A549 (cell line): ENCODE measurements at regions of chr12 and their contacts with region 1.

Region 1: GRCh38 chr12:5988659-5989116 is 43.6 kb upstream of the ANO2 start:
- DNase-seq: peak; percentile 73 to 80
- ATAC-seq: peak; percentile 92 to 99
- H3K4me3 ChIP-seq: no peak overlapping the region
- H3K27ac ChIP-seq: no peak overlapping the region
- H3K4me1 ChIP-seq: no peaks in the 10 kb centered on the region
- CTCF ChIP-seq: peak; percentile 90
- EP300 ChIP-seq: no peak
- POLR2A ChIP-seq: no peak
- RAD21 ChIP-seq: peak; percentile 94 to 95

Region 2: GRCh38 chr12:5954651-5955050 is 34.0 kb before region 1 on chr12:
- CTCF ChIA-PET with region 1: interaction called, 10 read pairs
- POLR2A ChIA-PET with region 1: no interaction called
- DNase-seq: no peak
- ATAC-seq: no peak
- H3K4me3 ChIP-seq: no peak overlapping the region
- H3K27ac ChIP-seq: no peak overlapping the region
- H3K4me1 ChIP-seq: no peaks in the 10 kb centered on the region
- CTCF ChIP-seq: no peak
- EP300 ChIP-seq: no peak
- POLR2A ChIP-seq: no peak
- RAD21 ChIP-seq: no peak

Region 3: DNA sequence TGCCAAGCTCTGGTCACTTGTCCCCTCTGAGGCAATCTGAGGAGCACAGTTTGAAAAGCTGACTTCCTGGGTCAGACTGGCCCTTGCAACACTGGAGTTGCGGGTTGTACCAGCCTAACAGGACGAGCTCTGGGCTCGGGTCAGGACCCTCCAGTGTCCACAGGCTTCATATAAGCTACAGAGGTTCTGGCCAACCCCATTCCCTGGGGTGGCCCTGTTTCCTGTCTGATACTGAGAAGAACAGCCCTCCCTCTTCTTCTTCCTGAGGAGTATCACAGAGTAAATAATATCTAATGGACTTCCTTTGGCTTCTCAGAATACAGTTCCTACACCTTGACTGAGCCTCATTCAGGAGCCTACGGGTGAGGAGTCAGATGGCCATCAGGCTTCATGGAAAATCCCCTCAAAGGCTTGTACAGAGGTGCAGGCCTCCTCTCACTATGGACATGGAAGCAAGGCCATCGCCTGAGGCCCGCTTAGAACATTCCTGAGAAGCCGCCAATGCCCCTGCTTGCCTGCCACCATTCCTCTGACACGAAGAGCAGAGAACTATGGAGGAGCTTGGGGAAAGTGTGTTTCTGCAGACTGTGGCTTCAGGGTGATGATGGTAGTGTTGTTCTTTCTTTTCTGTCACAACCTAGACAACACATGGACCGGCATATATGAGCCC is 15.1 kb before region 1 on chr12:
- CTCF ChIA-PET with region 1: interaction called, 64 read pairs
- POLR2A ChIA-PET with region 1: no interaction called
- DNase-seq: no peak
- ATAC-seq: no peak
- H3K4me3 ChIP-seq: no peak overlapping the region
- H3K27ac ChIP-seq: no peak overlapping the region
- H3K4me1 ChIP-seq: no peaks in the 10 kb centered on the region
- CTCF ChIP-seq: no peak
- EP300 ChIP-seq: no peak
- POLR2A ChIP-seq: no peak
- RAD21 ChIP-seq: no peak

Region 4: GRCh38 chr12:6047249-6048237 is 58.9 kb after region 1 on chr12:
- CTCF ChIA-PET with region 1: interaction called, 361 read pairs
- POLR2A ChIA-PET with region 1: no interaction called
- DNase-seq: no peak
- ATAC-seq: peak; percentile 22 to 31; a peak in 3 of 6 replicates
- H3K4me3 ChIP-seq: no peak overlapping the region
- H3K27ac ChIP-seq: no peak overlapping the region
- H3K4me1 ChIP-seq: peaks cover 7% of the 10 kb centered on the region; the same call in 2 of the 3 replicates
- CTCF ChIP-seq: no peak
- EP300 ChIP-seq: no peak
- POLR2A ChIP-seq: no peak
- RAD21 ChIP-seq: no peak

Region 5: DNA sequence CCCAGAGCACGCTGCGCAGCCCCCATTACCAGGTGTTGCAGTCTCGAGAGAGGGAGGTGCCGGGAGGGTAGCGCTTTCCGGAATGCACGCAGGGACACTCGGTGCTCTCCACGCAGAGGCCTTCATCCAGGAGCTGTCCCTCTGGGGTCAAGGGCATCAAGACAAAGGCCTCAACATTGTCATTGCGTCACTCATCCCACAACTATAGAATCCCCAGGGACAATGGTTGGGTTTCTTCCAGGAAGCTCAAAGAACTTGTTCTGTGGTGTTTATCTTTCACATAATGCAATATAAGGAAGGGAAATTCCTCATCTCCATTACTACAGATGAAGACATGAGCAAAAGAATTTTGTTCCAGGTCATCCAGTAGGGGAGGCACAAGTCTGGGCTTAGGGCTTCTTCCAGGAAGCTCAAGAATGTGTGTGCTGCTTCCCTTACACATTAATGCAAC is 83.6 kb after region 1 on chr12:
- CTCF ChIA-PET with region 1: interaction called, 11 read pairs
- POLR2A ChIA-PET with region 1: no interaction called
- DNase-seq: peak in 1 of 2 experiments; percentile 66
- ATAC-seq: peak in 1 of 2 experiments; percentile 48; a peak in 3 of 6 replicates
- H3K4me3 ChIP-seq: no peak overlapping the region
- H3K27ac ChIP-seq: no peak overlapping the region
- H3K4me1 ChIP-seq: 0 out of 3 replicates have a peak, but pooled peaks cover 4% of the 10 kb centered on the region
- CTCF ChIP-seq: no peak
- EP300 ChIP-seq: no peak
- POLR2A ChIP-seq: no peak
- RAD21 ChIP-seq: peak in 1 of 2 experiments; percentile 15; a peak in 1 of 5 replicates

Region 6: DNA sequence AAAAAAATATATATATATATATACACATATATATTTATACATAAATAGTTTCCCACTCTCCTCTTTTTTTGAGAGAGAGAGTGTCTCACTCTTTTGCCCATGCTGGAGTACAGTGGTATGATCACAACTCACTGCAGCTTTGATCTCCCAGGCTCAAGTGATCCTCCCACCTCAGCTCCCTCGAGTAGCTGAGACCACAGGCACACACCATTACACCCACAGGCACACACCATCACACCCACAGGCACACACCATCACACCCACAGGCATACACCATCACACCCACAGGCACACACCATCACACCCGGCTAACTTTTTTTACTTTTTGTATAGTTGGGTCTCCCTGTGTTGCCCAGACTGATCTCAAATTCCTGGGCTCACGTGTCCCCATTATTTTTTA is 531.5 kb after region 1 on chr12:
- CTCF ChIA-PET with region 1: no interaction called
- POLR2A ChIA-PET with region 1: no interaction called
- DNase-seq: no peak
- ATAC-seq: no peak
- H3K4me3 ChIP-seq: no peak overlapping the region
- H3K27ac ChIP-seq: no peak overlapping the region
- H3K4me1 ChIP-seq: no peaks in the 10 kb centered on the region
- CTCF ChIP-seq: no peak
- EP300 ChIP-seq: no peak
- POLR2A ChIP-seq: no peak
- RAD21 ChIP-seq: no peak